Head of caudate nucleus (tissue), 42 donors: ENCODE measurements at regions of chr6 and their contacts with region 1.

Region 1: DNA sequence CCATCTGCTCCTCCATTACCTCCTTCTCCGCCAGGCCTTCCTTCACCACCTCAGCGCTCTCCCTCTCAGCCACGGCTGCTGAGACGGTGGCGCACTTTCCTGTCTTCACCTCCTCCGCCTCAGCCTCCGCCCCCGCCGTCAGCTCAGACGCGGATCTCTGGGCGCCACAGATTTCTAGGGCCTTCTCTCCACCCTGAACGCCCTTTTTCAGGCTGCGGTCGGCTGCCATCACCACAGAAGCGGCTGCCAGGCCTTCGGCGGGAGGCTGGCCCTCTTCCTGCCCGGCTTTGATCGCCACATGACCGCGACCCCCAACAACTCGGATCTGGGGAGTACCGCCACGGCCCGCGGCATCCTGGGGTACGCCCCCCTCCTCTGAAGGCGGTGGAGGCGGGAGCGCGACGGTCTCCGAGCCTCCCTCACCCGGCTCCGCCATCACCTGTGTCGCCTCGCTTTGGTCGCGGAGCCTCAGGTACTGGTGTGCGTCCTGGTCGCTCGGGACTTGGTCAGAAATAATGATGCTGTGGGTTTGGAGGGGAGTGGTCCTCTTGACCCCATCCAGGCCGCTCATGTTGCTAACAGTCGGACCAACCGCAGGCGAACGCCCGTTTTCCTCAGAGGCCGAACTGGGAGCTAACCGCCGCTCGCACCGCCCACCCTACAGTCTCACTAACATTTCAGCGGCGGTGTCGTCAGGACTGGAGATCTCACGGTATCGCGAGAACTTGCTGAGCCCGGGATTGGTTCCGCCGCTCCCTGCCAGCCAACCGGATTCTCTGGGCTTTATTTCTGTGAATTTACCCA is at the start of gene TSPYL1:
- DNase-seq: peak; percentile 91 to 99 (median 97)

Region 2: GRCh38 chr6:115570331-115570730 is 709.1 kb before region 1 on chr6:
- intact Hi-C with region 1: no loop called
- DNase-seq: no peak

Region 3: DNA sequence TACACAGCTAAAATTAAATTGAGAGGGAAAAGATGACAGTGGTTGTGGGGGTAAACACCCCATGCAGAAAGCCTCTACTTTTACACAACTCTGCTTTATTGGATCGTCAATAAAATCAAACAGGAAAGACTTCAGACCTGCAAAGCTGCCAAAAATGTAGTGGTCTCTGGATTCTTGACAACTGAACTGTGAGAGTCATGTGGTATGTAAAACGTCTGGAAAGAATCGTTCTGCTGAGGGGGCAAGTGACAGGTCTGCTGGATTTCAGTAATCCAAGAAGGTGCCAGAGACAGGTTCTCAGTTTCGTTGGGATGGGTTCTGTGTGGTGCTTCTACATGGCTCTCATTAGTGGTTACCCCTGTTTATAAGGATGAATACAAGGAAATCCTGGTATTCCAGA is 88.9 kb before region 1 on chr6:
- intact Hi-C with region 1: no loop called
- DNase-seq: no peak

Region 4: GRCh38 chr6:116371120-116371917 is 91.9 kb after region 1 on chr6:
- intact Hi-C with region 1: loop called (anchors 5 kb)
- DNase-seq: peak; percentile 40 to 91 (median 72)

Region 5: GRCh38 chr6:116531675-116532570 is 252.5 kb after region 1 on chr6:
- intact Hi-C with region 1: loop called (anchors 5 kb)
- DNase-seq: peak in 38 of 42 donors; percentile 5 to 83 (median 58)

Region 6: DNA sequence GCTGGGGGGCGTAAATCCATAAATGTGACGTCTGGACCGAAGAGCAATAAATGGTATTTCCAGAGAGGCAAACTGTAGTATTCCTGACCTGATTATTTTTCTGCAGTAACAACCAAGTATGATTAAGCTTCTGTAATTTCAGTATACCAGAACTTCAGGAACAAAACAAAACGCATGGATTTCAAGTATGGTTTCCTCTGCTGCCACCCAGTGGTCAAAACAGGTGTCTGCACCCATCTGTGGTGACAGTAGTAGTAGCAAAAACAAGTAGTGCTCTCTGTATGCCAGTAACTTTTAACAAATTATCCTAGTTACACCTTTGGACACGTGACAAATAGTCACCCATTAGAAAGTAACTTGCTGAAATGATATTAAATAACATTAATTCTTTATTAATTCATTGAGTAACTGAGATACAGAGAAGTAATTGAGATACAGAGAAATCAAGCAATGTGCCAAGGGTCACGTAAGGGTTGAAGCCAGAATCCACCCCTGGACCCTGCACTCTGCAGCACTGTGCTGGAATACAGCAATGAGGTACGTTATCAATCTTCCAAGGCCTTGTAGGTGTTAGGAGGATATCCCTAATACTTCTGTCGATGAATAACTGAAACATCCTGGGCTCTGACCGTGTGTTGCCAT is 282.0 kb after region 1 on chr6:
- intact Hi-C with region 1: loop called (anchors 5 kb)
- DNase-seq: peak; percentile 36 to 93 (median 81)

Region 7: GRCh38 chr6:118061666-118062065 is 1782.2 kb after region 1 on chr6:
- intact Hi-C with region 1: no loop called
- DNase-seq: peak in 38 of 42 donors; percentile 1 to 70 (median 32)